Activated CD8-positive, alpha-beta T cell treated with anti-CD3 and anti-CD28 coated beads for 36 hours (primary cell): ENCODE measurements at regions of chr1 and their contacts with region 1.

Region 1: DNA sequence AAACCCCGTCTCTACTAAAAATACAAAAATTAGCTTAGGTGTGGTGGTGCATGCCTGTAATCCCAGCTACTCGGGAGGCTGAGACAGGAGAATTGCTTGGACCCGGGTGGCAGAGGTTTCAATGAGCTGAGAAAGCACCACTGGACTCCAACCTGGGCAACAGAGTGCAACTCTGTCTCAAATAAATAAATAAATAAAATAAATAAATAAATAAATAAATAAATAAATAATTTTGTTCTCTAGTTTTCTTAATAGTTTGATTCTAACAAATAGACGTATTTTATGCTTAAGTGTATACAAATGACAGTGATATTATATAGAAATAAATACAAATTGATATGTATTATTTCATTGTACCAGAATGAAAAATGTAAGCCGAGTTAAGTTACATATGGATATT is 339.9 kb upstream of the OLFM3 start:
- DNase-seq: no peak
- ATAC-seq: no peak
- H3K4me3 Mint-ChIP-seq: no peak overlapping the region
- H3K27ac Mint-ChIP-seq: no peak overlapping the region
- H3K4me1 Mint-ChIP-seq: no peaks in the 10 kb centered on the region
- H3K27me3 Mint-ChIP-seq: no peaks in the 10 kb centered on the region
- CTCF ChIP-seq: no peak

Region 2: DNA sequence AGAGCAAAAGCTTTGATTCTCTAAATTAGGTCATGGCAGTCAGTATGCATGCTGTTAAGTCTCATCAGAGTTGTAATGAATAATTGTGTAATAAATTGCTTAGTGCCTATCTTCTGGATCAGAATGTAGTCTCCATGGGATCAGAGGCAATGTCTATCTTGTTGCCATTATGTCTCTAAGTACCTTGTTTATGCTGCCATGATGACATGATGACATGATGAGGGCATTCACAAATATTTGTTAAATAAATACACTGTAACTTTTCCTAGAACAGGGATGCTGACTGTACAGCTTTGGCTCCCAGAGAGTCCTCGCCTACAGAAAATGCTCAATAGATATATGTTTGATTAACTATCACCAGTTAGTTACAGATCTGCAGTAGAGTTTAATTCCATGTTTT is 624.6 kb before region 1 on chr1:
- CTCF ChIA-PET with region 1: no interaction called
- POLR2A ChIA-PET with region 1: no interaction called
- intact Hi-C with region 1: loop called (anchors 10 kb)
- DNase-seq: no peak
- ATAC-seq: no peak
- H3K4me3 Mint-ChIP-seq: no peak overlapping the region
- H3K27ac Mint-ChIP-seq: no peak overlapping the region
- H3K4me1 Mint-ChIP-seq: no peaks in the 10 kb centered on the region
- H3K27me3 Mint-ChIP-seq: no peaks in the 10 kb centered on the region
- CTCF ChIP-seq: no peak